AG04449 (cell line): ENCODE measurements at regions of chr3 and their contacts with region 1.

Region 1: DNA sequence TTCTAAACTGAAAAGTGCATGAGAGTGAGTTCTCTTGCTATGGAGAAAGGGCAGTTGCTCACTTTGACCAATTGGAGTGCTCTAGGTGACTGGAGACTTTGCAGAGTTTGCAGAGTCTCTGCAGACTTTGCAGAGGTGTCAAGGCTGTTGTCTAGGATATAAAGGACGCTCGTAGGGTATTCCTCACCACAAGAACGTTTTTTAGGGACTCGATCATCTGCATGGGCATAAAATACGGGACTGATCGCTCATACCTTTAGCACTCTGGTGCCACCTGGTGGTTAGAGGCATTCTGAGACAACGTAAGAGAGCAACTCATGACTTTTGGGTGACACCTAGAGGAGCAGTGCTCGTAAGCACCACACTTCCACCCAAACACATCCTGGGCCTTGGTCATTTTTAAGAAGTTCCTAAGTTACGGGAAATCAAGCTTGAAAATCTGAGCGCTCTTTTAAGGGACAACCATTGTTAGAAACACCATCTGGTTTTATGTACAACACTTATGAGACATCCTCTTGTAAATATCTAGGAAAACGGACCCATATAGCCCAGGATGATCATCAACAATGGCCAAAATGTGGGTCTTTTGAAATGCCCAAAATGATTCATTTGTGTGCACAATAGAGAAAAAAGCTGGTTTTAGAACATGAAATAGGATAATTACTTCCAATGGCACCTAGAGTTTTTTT is 51.6 kb upstream of the XCR1 start:
- DNase-seq: peak; percentile 80
- H3K4me3 ChIP-seq: no peak overlapping the region
- CTCF ChIP-seq: peak; percentile 91

Region 2: DNA sequence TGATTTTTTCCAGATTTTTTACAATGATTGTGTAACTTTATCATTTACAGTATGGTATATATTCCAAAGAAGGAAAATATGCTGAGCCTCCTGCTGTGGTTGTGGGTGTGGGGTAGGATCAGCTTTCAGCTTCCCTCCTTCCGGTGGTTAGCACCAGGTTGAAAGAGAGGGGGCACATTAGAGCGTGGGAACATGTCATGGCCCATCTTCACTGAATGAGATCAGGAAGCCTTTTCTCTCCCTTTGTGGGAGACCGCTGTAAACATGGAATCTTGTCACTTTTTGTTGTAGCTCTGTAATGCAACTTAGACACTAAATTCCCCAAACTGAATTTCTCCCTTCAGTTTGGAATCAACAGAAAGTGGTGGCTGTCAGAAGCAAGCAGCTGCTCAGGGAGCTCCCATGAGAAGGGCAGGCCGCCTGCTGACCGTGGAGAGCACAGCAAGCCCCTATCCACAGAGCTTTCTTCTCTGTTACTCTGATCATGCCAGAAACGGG is 571.0 kb before region 1 on chr3:
- CTCF ChIA-PET with region 1: interaction called, 18 read pairs
- POLR2A ChIA-PET with region 1: no interaction called
- DNase-seq: no peak
- H3K4me3 ChIP-seq: no peak overlapping the region
- CTCF ChIP-seq: peak; percentile 79

Region 3: GRCh38 chr3:45906681-45907407 is 172.0 kb before region 1 on chr3:
- CTCF ChIA-PET with region 1: interaction called, 35 read pairs
- POLR2A ChIA-PET with region 1: no interaction called
- DNase-seq: peak; percentile 28
- H3K4me3 ChIP-seq: no peak overlapping the region
- CTCF ChIP-seq: peak; percentile 75

Region 4: DNA sequence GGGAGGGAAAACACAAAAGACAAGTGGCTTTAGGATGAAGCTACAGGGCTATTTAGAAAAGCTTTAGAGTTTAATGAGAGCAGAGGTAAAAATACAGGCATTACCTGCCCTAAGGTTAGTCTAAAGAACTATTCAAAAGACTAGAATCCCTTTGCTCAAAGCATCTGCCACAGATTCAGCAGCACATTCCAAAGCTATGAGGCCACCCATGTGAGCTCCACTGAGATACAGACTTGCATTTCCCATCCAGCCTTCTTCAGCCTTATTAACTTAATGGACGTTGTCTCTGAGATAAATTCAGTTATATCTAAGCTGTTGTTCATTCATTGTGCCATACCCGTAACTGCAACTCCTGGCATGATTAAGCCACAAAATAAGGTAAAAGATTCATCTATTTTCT is 110.2 kb before region 1 on chr3:
- CTCF ChIA-PET with region 1: interaction called, 62 read pairs
- POLR2A ChIA-PET with region 1: interaction called, 3 read pairs
- DNase-seq: no peak
- H3K4me3 ChIP-seq: no peak overlapping the region
- CTCF ChIP-seq: no peak

Region 5: GRCh38 chr3:46006238-46007032 is 72.4 kb before region 1 on chr3:
- CTCF ChIA-PET with region 1: no interaction called
- POLR2A ChIA-PET with region 1: no interaction called
- DNase-seq: peak; percentile 61
- H3K4me3 ChIP-seq: no peak overlapping the region
- CTCF ChIP-seq: no peak

Region 6: GRCh38 chr3:46049116-46049515 is 29.7 kb before region 1 on chr3:
- CTCF ChIA-PET with region 1: interaction called, 12 read pairs
- POLR2A ChIA-PET with region 1: no interaction called
- DNase-seq: no peak
- H3K4me3 ChIP-seq: no peak overlapping the region
- CTCF ChIP-seq: no peak

Region 7: GRCh38 chr3:46098319-46098761 is 19.5 kb after region 1 on chr3:
- CTCF ChIA-PET with region 1: interaction called, 16 read pairs
- POLR2A ChIA-PET with region 1: no interaction called
- DNase-seq: no peak
- H3K4me3 ChIP-seq: no peak overlapping the region
- CTCF ChIP-seq: no peak